ENCODE measurements at regions of chr19 and their contacts with region 1.

Region 1: GRCh38 chr19:47243776-47244547 is 12.4 kb upstream of the CCDC9 start:
- DNase-seq: peak; percentile 100
- H3K4me3 ChIP-seq: no peak overlapping the region
- H3K27ac ChIP-seq: peak overlapping the region; percentile 49
- H3K4me1 ChIP-seq: peaks cover 20% of the 10 kb centered on the region
- H3K27me3 ChIP-seq: no peaks in the 10 kb centered on the region
- CTCF ChIP-seq: peak; percentile 95 to 99
- POLR2A ChIP-seq: peak; percentile 53

Region 2: DNA sequence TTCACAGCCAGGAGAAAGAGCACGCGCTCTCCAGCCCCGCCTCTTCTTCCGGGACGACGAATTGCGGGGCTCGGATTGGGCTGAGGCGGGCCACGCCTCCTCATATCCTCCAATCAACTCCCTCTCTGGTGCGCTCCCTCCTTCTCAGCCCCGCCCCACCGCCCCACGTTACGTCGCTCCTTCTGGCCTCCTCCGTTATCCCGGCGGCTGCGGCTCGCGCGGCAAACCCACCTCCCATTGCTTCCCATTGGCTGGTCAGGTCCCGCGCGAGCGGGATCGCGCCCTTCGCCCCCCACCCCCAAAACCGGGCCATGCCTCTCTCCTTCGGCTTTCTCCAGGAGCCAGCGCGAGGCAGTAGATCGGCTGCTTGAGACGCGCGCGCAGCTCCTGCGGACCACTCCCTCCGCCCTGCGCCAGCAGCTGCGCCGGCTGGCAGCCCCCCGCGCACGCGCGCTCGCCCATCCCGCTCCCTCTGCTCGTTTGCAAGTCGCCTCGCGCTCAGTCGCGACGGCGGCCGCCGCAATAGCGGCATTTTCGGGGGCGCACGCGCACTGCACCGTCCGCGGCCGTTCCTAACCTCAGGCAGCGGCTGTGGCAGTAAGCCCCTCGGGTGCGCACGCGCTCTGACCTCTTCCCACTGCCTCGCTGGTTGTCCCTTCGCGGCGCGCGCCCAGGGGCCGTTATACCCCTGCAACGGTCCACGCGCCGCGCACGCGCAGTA is 383.7 kb before region 1 on chr19:
- CTCF ChIA-PET with region 1: no interaction called
- POLR2A ChIA-PET with region 1: no interaction called
- dilution Hi-C with region 1: no loop called
- intact Hi-C with region 1: loop called (anchors 5 kb)
- DNase-seq: peak; percentile 99
- H3K4me3 ChIP-seq: peak overlapping the region; percentile 16 to 81 (median 52)
- H3K27ac ChIP-seq: peak overlapping the region; percentile 76
- H3K4me1 ChIP-seq: peaks cover 33% of the 10 kb centered on the region
- H3K27me3 ChIP-seq: no peaks in the 10 kb centered on the region
- CTCF ChIP-seq: no peak
- POLR2A ChIP-seq: peak; percentile 38

Region 3: GRCh38 chr19:47075179-47075810 is 168.7 kb before region 1 on chr19:
- CTCF ChIA-PET with region 1: interaction called, 25 read pairs
- POLR2A ChIA-PET with region 1: no interaction called
- dilution Hi-C with region 1: no loop called
- intact Hi-C with region 1: loop called (anchors 1 kb)
- DNase-seq: no peak
- H3K4me3 ChIP-seq: no peak overlapping the region
- H3K27ac ChIP-seq: no peak overlapping the region
- H3K4me1 ChIP-seq: no peaks in the 10 kb centered on the region
- H3K27me3 ChIP-seq: no peaks in the 10 kb centered on the region
- CTCF ChIP-seq: no peak
- POLR2A ChIP-seq: no peak

Region 4: GRCh38 chr19:47152224-47153017 is 91.5 kb before region 1 on chr19:
- CTCF ChIA-PET with region 1: interaction called, 223 read pairs
- POLR2A ChIA-PET with region 1: interaction called, 18 read pairs
- dilution Hi-C with region 1: no loop called
- intact Hi-C with region 1: loop called (anchors 1 kb)
- DNase-seq: peak; percentile 77
- H3K4me3 ChIP-seq: no peak overlapping the region
- H3K27ac ChIP-seq: peak overlapping the region; percentile 36
- H3K4me1 ChIP-seq: peaks cover 26% of the 10 kb centered on the region
- H3K27me3 ChIP-seq: no peaks in the 10 kb centered on the region
- CTCF ChIP-seq: no peak
- POLR2A ChIP-seq: no peak

Region 5: DNA sequence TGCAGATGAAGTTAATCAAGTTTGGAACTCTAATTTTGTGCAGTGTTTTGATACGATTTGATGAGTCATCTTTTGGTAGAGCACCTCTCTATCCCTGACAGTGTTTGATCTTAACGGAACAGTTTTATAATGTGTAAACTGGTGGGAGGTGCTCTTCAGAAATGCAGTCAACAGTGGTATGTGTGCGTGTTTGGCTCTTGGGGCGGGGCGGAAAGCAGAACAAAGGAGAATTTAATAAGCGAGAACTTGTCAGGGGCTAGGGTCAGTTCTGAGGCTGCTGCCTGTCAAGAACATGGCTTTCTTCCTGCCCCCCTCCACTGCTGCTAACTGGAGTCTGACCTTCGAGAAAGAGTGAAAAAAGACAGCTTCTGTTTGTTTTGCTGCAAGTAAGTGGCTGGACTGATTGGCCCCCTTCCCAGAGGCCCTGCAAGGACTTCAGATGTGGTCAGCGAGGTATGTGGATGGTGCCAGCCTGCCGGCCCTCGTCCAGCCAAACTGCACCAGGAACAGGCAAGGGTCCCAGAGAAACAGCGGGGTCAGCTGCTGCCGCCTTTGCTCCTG is 53.7 kb before region 1 on chr19:
- CTCF ChIA-PET with region 1: interaction called, 16 read pairs
- POLR2A ChIA-PET with region 1: no interaction called
- dilution Hi-C with region 1: no loop called
- intact Hi-C with region 1: no loop called
- DNase-seq: peak; percentile 97
- H3K4me3 ChIP-seq: peak overlapping the region in 1 of 3 experiments; percentile 20
- H3K27ac ChIP-seq: peak overlapping the region; percentile 96
- H3K4me1 ChIP-seq: peaks cover 24% of the 10 kb centered on the region
- H3K27me3 ChIP-seq: no peaks in the 10 kb centered on the region
- CTCF ChIP-seq: no peak
- POLR2A ChIP-seq: no peak

Region 6: GRCh38 chr19:47225746-47226425 is 18.1 kb before region 1 on chr19:
- CTCF ChIA-PET with region 1: interaction called, 74 read pairs
- POLR2A ChIA-PET with region 1: interaction called, 27 read pairs
- dilution Hi-C with region 1: no loop called
- intact Hi-C with region 1: loop called (anchors 1 kb)
- DNase-seq: peak; percentile 84
- H3K4me3 ChIP-seq: peak overlapping the region in 1 of 3 experiments; percentile 31
- H3K27ac ChIP-seq: peak overlapping the region; percentile 61
- H3K4me1 ChIP-seq: peaks cover 22% of the 10 kb centered on the region
- H3K27me3 ChIP-seq: no peaks in the 10 kb centered on the region
- CTCF ChIP-seq: peak in 1 of 2 donors; percentile 6
- POLR2A ChIP-seq: peak; percentile 100

Measured in endothelial cell of umbilical vein (primary cell).